Heart left ventricle (tissue), 16 donors: ENCODE measurements at regions of chr1 and their contacts with region 1.

Region 1: DNA sequence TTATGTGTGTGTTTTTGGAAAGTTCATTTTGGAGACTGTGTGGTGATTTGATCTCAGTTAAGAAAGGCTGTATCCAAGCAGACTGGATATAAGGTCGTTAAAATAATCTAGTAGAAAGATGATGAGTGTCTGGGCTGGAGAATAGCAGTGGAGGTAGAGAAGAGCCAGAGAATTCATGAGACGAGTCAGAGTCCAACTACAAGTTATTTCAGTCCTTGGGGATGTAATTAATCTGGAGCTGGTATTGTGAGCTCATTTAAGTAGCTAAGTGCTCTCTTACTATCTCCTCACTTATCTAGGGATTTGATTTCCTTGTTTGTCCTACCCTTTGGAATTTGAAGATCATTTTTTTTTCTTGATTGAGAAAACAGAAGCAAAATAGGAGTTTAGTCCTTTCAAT is 1219.0 kb upstream of the ADGRL4 start:
- DNase-seq: no peak
- ATAC-seq: no peak
- H3K4me3 ChIP-seq: no peak overlapping the region
- H3K27ac ChIP-seq: no peak overlapping the region
- H3K4me1 ChIP-seq: peaks cover 0 to 4% (median 0%) of the 10 kb centered on the region in 12 donors
- H3K27me3 ChIP-seq: no peaks in the 10 kb centered on the region
- CTCF ChIP-seq: no peak
- POLR2A ChIP-seq: no peak

Region 2: DNA sequence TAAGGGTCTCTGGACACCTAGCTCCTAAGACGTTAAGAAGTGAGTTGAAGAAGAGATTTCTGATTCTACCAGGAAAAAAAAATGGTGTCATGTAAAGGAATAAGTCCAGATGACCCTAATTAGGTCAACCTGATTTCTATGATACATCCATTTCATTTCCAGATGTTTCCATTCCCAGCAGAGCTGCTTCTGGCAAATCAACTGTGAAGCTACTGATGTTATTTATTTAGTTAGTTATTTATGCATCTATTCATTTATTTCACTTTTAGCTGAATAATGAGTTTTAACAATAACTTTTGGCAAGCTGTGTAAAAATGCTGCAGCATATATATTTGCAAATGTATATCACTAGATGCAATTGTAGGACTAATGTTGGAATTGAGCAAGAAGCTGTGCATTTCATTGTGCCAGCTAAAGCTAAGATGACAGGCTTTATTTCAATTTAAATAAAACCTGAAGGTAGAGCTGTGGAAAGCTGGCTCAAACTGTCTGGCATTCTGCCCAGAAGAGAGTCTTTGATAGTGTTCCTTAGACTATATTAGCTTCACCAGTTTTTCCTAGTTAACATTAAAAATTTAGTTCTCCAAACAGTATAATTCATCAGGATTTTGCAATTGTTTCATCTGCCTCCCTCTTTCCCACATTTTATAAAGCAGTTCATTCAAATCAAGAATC is 54.6 kb before region 1 on chr1:
- intact Hi-C with region 1: no loop called
- DNase-seq: peak in 1 of 5 donors; percentile 7
- ATAC-seq: no peak
- H3K4me3 ChIP-seq: no peak overlapping the region
- H3K27ac ChIP-seq: no peak overlapping the region
- H3K4me1 ChIP-seq: peaks cover 0 to 6% (median 0%) of the 10 kb centered on the region in 12 donors
- H3K27me3 ChIP-seq: no peaks in the 10 kb centered on the region
- CTCF ChIP-seq: no peak
- POLR2A ChIP-seq: no peak

Region 3: DNA sequence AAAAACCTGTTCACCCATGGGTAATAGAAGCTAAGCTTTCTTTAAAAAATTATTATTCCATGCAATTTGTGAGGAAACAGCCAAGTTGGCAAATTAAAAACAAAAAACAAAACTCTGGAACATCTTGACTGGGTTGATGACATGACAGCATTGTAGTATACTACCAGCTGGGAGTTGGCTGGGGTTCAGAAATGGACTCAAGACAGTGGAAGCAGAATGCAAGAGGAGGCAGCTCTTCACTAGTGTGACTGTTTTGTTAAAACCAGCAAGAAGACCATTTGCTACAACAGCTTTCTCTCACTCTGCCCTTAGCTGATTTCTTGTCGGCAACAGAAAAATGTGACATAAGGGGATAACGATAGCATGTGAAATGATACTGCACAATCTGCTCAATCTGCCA is 80.0 kb after region 1 on chr1:
- intact Hi-C with region 1: loop called in 1 of 10 experiments (anchors 10 kb)
- DNase-seq: no peak
- ATAC-seq: no peak
- H3K4me3 ChIP-seq: no peak overlapping the region
- H3K27ac ChIP-seq: no peak overlapping the region
- H3K4me1 ChIP-seq: no peaks in the 10 kb centered on the region
- H3K27me3 ChIP-seq: peaks cover 0 to 5% (median 0%) of the 10 kb centered on the region in 9 donors
- CTCF ChIP-seq: no peak
- POLR2A ChIP-seq: no peak

Region 4: DNA sequence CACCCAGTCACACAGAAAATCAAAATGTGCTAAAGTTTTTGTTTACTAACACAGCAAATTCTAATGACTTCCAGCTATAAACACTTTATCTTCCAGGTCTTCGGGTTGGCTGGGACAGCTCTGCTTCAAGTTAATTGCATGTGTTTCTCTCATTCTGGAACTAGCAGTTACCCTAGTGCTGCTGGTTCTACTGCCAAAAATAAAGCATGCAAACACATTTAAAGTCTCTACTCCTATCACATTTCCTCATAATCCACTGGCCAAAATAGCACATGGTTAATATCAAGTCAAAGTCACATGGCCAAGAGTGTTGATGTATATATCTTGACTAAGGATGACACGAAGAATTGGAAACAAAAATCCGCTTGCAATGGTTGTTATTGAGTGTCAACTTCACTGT is 602.2 kb after region 1 on chr1:
- intact Hi-C with region 1: no loop called
- DNase-seq: no peak
- ATAC-seq: no peak
- H3K4me3 ChIP-seq: no peak overlapping the region
- H3K27ac ChIP-seq: no peak overlapping the region
- H3K4me1 ChIP-seq: no peaks in the 10 kb centered on the region
- H3K27me3 ChIP-seq: no peaks in the 10 kb centered on the region
- CTCF ChIP-seq: no peak
- POLR2A ChIP-seq: no peak